GM10248 (cell line): ENCODE measurements at regions of chr2 and their contacts with region 1.

Region 1: GRCh38 chr2:61764035-61764800 is 89.6 kb downstream of the FAM161A start:
- DNase-seq: peak; percentile 96
- CTCF ChIP-seq: no peak

Region 2: DNA sequence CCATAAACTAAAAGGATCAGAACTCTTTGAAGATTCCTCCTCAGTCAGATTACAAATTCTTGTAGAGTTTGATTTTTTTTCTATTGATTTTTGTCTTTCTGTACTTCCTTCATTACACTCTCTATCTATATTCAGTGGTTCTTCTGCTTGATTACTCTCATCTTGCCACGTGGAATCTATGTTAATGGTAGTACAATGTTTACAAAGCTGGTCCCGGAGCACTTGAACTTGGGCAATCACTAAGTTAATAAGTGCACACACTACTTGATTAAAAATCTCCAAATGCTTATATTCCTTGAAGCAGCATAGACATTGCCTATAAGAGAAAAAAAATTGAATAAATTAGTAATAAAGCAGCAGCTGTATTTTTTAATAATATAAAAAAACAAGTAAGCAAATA is 358.4 kb before region 1 on chr2:
- CTCF ChIA-PET with region 1: no interaction called
- POLR2A ChIA-PET with region 1: interaction called, 13 read pairs
- DNase-seq: no peak
- CTCF ChIP-seq: no peak

Region 3: GRCh38 chr2:61585383-61585782 is 178.8 kb before region 1 on chr2:
- CTCF ChIA-PET with region 1: no interaction called
- POLR2A ChIA-PET with region 1: interaction called, 10 read pairs
- DNase-seq: peak; percentile 56
- CTCF ChIP-seq: no peak

Region 4: GRCh38 chr2:61733563-61733962 is 30.7 kb before region 1 on chr2:
- CTCF ChIA-PET with region 1: no interaction called
- POLR2A ChIA-PET with region 1: no interaction called
- DNase-seq: no peak
- CTCF ChIP-seq: no peak